ENCODE measurements at regions of chr6 and their contacts with region 1.

Region 1: GRCh38 chr6:122184401-122184827 is 215.0 kb upstream of the HSF2 start:
- DNase-seq: no peak
- ATAC-seq: peak in 7 of 8 donors; percentile 46 to 74 (median 70)
- H3K4me3 ChIP-seq: peak overlapping the region in 6 of 10 donors; percentile 11 to 35 (median 23)
- H3K27ac ChIP-seq: no peak overlapping the region
- H3K4me1 ChIP-seq: peaks cover 0 to 7% (median 0%) of the 10 kb centered on the region in 9 donors
- H3K27me3 ChIP-seq: no peaks in the 10 kb centered on the region
- CTCF ChIP-seq: peak in 8 of 9 donors; percentile 18 to 68 (median 54)

Region 2: GRCh38 chr6:121067381-121067780 is 1117.0 kb before region 1 on chr6:
- intact Hi-C with region 1: loop called in 1 of 10 experiments (anchors 10 kb)
- DNase-seq: no peak
- ATAC-seq: no peak
- H3K4me3 ChIP-seq: no peak overlapping the region
- H3K27ac ChIP-seq: no peak overlapping the region
- H3K4me1 ChIP-seq: no peaks in the 10 kb centered on the region
- H3K27me3 ChIP-seq: no peaks in the 10 kb centered on the region
- CTCF ChIP-seq: no peak

Region 3: DNA sequence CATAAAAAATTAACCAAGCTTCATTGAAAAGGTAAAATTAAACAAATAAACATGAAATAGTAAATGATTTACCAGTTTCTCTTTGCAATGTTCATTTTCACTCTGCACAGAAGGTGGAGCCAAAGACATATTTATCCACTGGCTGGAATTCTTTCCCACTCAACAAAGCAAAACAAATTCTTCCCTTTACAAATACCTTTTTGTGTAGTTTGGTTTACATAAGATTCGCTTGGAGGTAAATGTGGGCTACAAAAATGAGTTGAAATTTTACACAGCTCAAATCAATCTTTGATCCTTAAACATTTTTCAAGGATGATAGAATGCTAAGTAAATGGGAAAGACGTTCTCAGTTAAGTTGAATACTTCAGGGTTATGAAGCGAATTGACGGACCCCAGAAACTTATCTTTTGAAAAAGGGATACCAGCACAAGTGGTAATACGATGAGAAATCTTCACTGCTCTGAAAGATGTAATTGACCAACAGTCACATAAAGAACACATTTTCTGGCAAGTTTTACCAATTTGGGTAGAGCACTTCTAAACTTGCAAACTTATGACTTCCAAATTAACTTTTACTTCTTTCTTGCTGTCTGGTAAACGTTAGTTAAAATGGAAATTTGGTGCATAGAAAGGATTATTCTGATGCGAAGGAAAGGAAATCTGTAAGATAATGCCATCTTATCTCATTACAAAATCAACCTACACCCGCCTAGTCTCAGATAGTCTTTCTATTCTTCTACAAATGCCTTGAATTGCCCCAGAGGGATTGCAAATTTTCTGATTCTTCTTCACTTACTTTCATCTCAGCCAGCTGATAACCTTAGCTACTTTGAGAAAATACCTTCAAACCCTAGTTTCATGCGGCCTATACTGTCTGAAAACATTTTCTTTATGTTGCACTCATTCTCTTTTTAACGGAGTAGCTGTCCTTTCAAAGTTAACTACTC is 753.6 kb before region 1 on chr6:
- intact Hi-C with region 1: loop called (anchors 2 to 10 kb)
- DNase-seq: no peak
- ATAC-seq: peak in 2 of 8 donors; percentile 43 to 48
- H3K4me3 ChIP-seq: peak overlapping the region in 2 of 10 donors; percentile 8 to 14
- H3K27ac ChIP-seq: peak overlapping the region in 4 of 10 donors; percentile 6 to 32 (median 26)
- H3K4me1 ChIP-seq: peaks cover 0 to 24% (median 8%) of the 10 kb centered on the region in 9 donors
- H3K27me3 ChIP-seq: peaks cover 0 to 3% (median 0%) of the 10 kb centered on the region in 7 donors
- CTCF ChIP-seq: peak; percentile 44 to 89 (median 66)

Region 4: GRCh38 chr6:121694389-121695251 is 489.8 kb before region 1 on chr6:
- intact Hi-C with region 1: loop called in 1 of 10 experiments (anchors 5 kb)
- DNase-seq: no peak
- ATAC-seq: no peak
- H3K4me3 ChIP-seq: no peak overlapping the region
- H3K27ac ChIP-seq: no peak overlapping the region
- H3K4me1 ChIP-seq: peaks cover 0 to 7% (median 0%) of the 10 kb centered on the region in 9 donors
- H3K27me3 ChIP-seq: no peaks in the 10 kb centered on the region
- CTCF ChIP-seq: no peak

Region 5: GRCh38 chr6:121856296-121856695 is 328.1 kb before region 1 on chr6:
- intact Hi-C with region 1: loop called in 5 of 10 experiments (anchors 5 to 10 kb)
- DNase-seq: no peak
- ATAC-seq: no peak
- H3K4me3 ChIP-seq: no peak overlapping the region
- H3K27ac ChIP-seq: no peak overlapping the region
- H3K4me1 ChIP-seq: peaks cover 0 to 9% (median 0%) of the 10 kb centered on the region in 9 donors
- H3K27me3 ChIP-seq: no peaks in the 10 kb centered on the region
- CTCF ChIP-seq: no peak

Region 6: DNA sequence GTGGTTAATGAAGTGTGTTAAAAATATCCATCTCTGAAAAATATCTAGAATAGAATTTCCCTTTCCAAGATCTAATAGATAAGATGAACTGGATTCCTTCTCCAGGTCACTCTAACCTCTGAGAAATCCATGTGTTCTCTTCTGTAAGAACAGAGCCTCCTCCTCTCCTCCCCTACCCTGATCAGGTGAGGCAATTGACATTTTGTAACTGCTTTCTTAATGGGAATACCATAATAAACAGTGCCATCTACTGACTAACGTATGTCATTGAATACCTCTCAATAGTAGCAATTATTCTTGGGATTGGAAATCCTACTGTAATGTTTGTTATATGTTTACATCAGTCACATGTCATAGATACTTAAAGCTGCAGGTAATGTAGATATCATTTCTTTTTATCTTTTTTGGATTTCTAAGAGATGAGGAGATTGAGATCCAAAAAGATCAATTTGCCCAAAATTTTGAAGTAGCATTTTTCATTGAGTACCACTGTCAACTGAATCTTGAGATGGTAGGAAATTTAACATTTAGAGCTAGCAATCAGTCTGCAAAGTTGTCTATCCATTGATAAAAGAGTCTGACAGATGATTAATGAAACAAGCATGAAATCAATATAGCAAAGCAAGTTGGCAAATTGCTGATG is 150.8 kb before region 1 on chr6:
- intact Hi-C with region 1: loop called in 7 of 10 experiments (anchors 5 to 10 kb)
- DNase-seq: no peak
- ATAC-seq: peak; percentile 70 to 91 (median 86)
- H3K4me3 ChIP-seq: no peak overlapping the region
- H3K27ac ChIP-seq: peak overlapping the region in 2 of 10 donors; percentile 19 to 35
- H3K4me1 ChIP-seq: peaks cover 0 to 9% (median 0%) of the 10 kb centered on the region in 9 donors
- H3K27me3 ChIP-seq: no peaks in the 10 kb centered on the region
- CTCF ChIP-seq: peak; percentile 20 to 80 (median 65)

Region 7: GRCh38 chr6:122130026-122130348 is 54.4 kb before region 1 on chr6:
- intact Hi-C with region 1: loop called in 1 of 10 experiments (anchors 5 kb)
- DNase-seq: peak in 1 of 2 donors; percentile 52
- ATAC-seq: peak; percentile 41 to 89 (median 82)
- H3K4me3 ChIP-seq: no peak overlapping the region
- H3K27ac ChIP-seq: peak overlapping the region; percentile 40 to 86 (median 80)
- H3K4me1 ChIP-seq: peaks cover 0 to 35% (median 2%) of the 10 kb centered on the region in 9 donors
- H3K27me3 ChIP-seq: no peaks in the 10 kb centered on the region
- CTCF ChIP-seq: no peak

Region 8: DNA sequence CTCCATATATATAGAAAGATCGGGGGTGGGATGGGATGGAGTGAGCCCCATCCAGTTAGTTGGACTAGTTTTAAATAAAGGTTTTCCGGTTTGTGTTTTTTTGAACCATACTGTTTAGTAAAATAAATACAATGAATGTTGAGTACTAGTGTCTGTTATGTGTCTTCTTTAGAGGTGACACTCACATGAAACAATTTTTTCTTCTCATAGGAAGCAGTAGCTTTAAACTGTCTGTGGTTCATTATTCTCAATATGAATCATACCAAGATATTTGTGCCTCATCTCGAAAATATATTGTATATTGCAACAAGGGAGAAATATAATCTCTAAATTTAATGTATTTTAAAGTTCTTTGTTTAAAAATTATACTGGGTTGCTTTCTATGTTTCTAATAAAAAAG is 248.4 kb after region 1 on chr6:
- intact Hi-C with region 1: no loop called
- DNase-seq: no peak
- ATAC-seq: no peak
- H3K4me3 ChIP-seq: no peak overlapping the region
- H3K27ac ChIP-seq: no peak overlapping the region
- H3K4me1 ChIP-seq: no peaks in the 10 kb centered on the region
- H3K27me3 ChIP-seq: no peaks in the 10 kb centered on the region
- CTCF ChIP-seq: no peak

Region 9: GRCh38 chr6:122484760-122485159 is 300.3 kb after region 1 on chr6:
- intact Hi-C with region 1: no loop called
- DNase-seq: no peak
- ATAC-seq: no peak
- H3K4me3 ChIP-seq: no peak overlapping the region
- H3K27ac ChIP-seq: no peak overlapping the region
- H3K4me1 ChIP-seq: no peaks in the 10 kb centered on the region
- H3K27me3 ChIP-seq: no peaks in the 10 kb centered on the region
- CTCF ChIP-seq: no peak

Measured in heart right ventricle (tissue), 16 donors.